Activated CD4-positive, alpha-beta T cell treated with anti-CD3 and anti-CD28 coated beads for 36 hours (primary cell): ENCODE measurements at regions of chrX and their contacts with region 1.

Region 1: DNA sequence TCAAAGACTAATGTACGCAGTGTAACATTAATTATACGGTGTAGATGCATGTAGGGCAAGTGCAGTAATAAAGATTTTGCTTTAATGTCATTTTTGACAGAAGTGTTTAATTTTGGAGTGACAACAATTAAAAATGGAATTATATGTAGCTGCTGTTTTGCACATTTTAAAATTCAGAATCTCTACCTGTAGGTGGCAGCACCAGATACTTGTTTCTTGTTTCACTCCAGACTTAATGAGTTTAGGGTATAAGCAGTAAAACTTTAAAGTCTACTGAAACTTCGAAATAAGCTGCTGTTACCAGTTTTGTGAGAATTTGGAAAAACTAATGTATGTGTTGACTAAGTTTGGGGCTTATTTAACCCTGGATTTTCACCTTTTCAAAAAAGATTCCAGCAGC is 144.9 kb downstream of the POLA1 start:
- DNase-seq: no peak
- ATAC-seq: no peak
- H3K4me3 Mint-ChIP-seq: no peak overlapping the region
- H3K27ac Mint-ChIP-seq: no peak overlapping the region
- H3K4me1 Mint-ChIP-seq: no peaks in the 10 kb centered on the region
- H3K27me3 Mint-ChIP-seq: no peaks in the 10 kb centered on the region

Region 2: DNA sequence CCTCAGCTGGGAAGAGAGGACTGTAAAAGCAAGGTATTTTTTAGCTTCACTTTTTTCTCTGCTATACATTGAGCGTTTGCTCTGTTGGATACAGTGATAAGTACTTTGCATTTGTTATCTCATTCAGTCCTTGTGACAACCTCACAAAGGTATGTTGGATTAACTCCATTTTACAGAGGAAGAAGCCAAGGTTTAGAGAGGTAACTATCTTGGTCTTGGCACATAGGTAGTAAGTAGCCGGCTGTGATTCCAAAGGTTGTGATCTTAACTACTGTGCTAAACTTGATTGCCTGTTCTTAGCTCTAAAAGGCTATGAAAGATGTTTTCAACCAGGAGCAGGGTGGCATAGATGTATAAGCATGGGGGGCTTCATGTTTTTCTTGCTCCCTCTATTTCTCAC is 10.5 kb before region 1 on chrX:
- CTCF ChIA-PET with region 1: interaction called, 17 read pairs
- POLR2A ChIA-PET with region 1: interaction called, 3 read pairs
- intact Hi-C with region 1: no loop called
- DNase-seq: no peak
- ATAC-seq: no peak
- H3K4me3 Mint-ChIP-seq: no peak overlapping the region
- H3K27ac Mint-ChIP-seq: no peak overlapping the region
- H3K4me1 Mint-ChIP-seq: no peaks in the 10 kb centered on the region
- H3K27me3 Mint-ChIP-seq: no peaks in the 10 kb centered on the region

Region 3: DNA sequence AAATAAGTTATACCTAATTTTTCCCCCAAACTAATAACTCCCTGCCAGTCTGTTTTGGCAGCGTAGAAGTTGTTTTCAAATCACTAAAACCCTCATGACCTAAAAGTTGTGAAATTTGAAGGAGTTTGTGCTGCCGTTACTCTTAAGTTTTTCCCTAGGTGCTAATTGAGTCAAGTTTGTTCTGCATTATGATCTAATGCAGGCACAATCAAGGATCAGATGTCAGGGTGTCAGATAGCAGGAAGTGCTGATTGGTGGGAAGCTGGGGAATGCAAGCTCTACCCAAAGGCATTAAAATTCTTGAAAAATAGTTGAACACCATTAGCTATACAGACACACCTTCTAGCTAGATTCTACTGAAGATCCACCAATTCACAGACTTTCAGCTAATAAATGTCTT is 125.2 kb after region 1 on chrX:
- CTCF ChIA-PET with region 1: no interaction called
- POLR2A ChIA-PET with region 1: no interaction called
- intact Hi-C with region 1: no loop called
- DNase-seq: no peak
- ATAC-seq: no peak
- H3K4me3 Mint-ChIP-seq: no peak overlapping the region
- H3K27ac Mint-ChIP-seq: no peak overlapping the region
- H3K4me1 Mint-ChIP-seq: no peaks in the 10 kb centered on the region
- H3K27me3 Mint-ChIP-seq: no peaks in the 10 kb centered on the region

Region 4: DNA sequence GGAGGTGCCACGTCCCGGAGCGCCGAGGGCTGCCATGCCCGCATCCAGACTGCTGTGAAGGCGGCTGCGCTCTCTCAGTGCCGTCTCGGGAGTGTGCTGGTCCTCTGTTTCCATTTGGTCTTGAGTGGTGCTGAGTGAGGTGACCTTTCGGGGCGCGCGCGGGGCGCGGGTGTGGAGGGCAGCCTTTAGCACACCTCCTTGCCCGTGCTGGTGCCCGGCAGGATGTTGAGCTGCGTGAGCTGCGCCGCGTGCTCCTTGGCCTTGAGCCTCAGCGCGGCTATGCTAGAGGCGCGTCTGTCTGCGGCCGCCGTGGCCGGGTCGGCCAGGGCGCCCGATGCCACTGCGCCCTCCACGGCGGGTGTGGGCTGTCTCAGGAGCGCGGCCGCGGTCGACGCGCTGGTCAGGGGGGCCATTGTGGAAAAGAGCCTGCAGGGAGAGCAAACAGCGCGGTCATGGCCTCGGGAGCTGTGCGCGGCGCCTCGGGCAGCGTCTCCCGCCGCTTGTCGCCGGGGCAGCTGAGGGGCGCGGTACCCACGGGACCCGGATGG is 165.9 kb after region 1 on chrX:
- CTCF ChIA-PET with region 1: interaction called, 3 read pairs
- POLR2A ChIA-PET with region 1: no interaction called
- intact Hi-C with region 1: loop called in 1 of 2 experiments (anchors 5 kb)
- DNase-seq: no peak
- ATAC-seq: no peak
- H3K4me3 Mint-ChIP-seq: peak overlapping the region; percentile 18
- H3K27ac Mint-ChIP-seq: no peak overlapping the region
- H3K4me1 Mint-ChIP-seq: peaks cover 5% of the 10 kb centered on the region
- H3K27me3 Mint-ChIP-seq: peaks cover 43% of the 10 kb centered on the region

Region 5: GRCh38 chrX:25020905-25021449 is 182.3 kb after region 1 on chrX:
- CTCF ChIA-PET with region 1: interaction called, 3 read pairs
- POLR2A ChIA-PET with region 1: no interaction called
- intact Hi-C with region 1: loop called (anchors 5 kb)
- DNase-seq: peak; percentile 60
- ATAC-seq: peak; percentile 60
- H3K4me3 Mint-ChIP-seq: no peak overlapping the region
- H3K27ac Mint-ChIP-seq: no peak overlapping the region
- H3K4me1 Mint-ChIP-seq: peaks cover 20% of the 10 kb centered on the region
- H3K27me3 Mint-ChIP-seq: peaks cover 50% of the 10 kb centered on the region

Region 6: DNA sequence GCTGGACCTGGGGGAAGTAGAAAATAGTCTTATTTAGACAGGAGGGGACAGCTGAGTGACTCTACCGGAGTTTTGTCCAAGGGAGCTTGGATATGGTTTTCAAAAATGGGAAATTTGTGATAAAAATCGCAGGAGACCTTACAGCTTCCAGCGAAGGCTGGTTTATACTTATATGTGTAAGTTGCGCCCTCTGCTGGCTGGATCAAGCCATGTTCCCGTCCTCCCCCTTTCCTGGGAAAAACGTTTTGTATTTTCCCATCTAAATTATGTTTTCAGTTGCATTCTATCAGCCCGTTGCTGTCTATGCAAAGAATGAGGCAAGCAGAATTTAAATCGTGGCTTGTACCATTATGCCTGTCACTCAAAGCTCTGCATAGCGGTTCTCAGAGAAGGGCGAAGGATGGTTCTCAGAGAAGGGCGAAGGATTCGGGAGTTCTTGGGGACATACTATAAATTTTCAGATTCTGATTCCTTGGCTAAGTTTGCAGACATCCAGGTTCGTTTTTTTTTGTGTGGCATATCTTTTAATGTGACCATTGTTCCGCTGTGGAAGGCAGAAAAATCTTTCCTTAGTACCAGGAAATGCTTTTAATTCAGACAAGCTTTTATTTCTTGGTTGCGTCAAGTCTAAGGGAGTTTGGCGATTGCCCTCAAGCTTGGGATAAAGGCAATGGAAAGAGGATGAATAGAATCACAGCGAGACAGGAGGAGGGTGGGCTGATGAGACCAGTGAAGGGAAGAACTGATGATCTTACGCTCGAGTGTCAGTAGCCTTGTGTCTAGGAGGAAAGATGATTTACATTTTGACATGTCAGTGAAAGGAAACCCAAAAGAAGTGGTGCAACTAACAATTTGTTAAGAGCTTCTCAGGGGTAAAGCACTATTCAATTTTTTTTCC is 305.7 kb after region 1 on chrX:
- CTCF ChIA-PET with region 1: interaction called, 22 read pairs
- POLR2A ChIA-PET with region 1: no interaction called
- intact Hi-C with region 1: loop called (anchors 1 to 5 kb)
- DNase-seq: peak; percentile 55
- ATAC-seq: no peak
- H3K4me3 Mint-ChIP-seq: no peak overlapping the region
- H3K27ac Mint-ChIP-seq: no peak overlapping the region
- H3K4me1 Mint-ChIP-seq: peaks cover 2% of the 10 kb centered on the region
- H3K27me3 Mint-ChIP-seq: peaks cover 3% of the 10 kb centered on the region